ENCODE measurements at regions of chr1 and their contacts with region 1.

Region 1: GRCh38 chr1:53485478-53486394 is 26.5 kb downstream of the DMRTB1 start:
- ATAC-seq: peak; percentile 93 to 99 (median 96)
- H3K4me3 ChIP-seq: no peak overlapping the region
- H3K27ac ChIP-seq: no peak overlapping the region
- H3K4me1 ChIP-seq: peaks cover 10 to 11% of the 10 kb centered on the region in 2 donors

Region 2: GRCh38 chr1:53681977-53682685 is 196.4 kb after region 1 on chr1:
- in situ Hi-C with region 1: loop called in 2 of 9 experiments (anchors 10 to 25 kb)
- ATAC-seq: peak; percentile 43 to 77 (median 68)
- H3K4me3 ChIP-seq: no peak overlapping the region
- H3K27ac ChIP-seq: no peak overlapping the region
- H3K4me1 ChIP-seq: peaks cover 23 to 43% of the 10 kb centered on the region in 2 donors

Region 3: DNA sequence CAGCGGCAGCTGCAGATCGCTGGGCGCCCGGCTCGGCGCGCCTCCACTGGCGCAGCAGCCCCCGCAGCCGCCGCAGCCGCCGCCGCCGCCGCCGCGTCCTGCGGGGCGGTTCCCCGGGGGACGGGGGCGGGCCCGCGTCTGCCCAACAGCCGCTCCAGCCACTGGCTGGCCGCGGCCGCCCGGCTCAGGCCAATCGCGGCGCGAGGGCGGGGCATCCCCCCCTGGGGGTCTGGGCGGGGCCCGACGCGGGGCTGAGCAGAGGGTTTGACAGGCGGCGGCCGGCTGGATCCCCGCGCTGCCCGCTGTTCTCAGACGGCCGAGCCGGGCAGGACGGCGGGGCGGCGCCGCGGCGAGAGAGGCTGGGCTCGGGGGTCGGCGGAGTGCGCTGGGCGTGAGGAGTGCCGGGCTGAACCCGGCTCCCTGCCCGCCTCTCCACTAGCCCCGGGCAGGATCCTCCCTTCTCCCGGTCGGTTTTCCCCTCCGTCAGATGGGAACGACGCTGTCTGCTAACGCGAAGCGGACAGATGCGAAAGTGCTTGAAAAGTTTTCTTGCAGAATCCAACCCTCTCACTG is 253.5 kb after region 1 on chr1 and contains the start of gene GLIS1:
- in situ Hi-C with region 1: loop called in 3 of 9 experiments (anchors 25 kb)
- ATAC-seq: peak; percentile 86 to 98 (median 97)
- H3K4me3 ChIP-seq: peak within 1 kb of the TSS; percentile 40 to 55 (median 46)
- H3K27ac ChIP-seq: no peak within 1 kb of the TSS
- H3K4me1 ChIP-seq: peaks cover 0 to 5% of the 10 kb centered on the region in 2 donors
- total RNA-seq, gene GLIS1: 0.14 to 4.7 (median 0.33) TPM

Region 4: DNA sequence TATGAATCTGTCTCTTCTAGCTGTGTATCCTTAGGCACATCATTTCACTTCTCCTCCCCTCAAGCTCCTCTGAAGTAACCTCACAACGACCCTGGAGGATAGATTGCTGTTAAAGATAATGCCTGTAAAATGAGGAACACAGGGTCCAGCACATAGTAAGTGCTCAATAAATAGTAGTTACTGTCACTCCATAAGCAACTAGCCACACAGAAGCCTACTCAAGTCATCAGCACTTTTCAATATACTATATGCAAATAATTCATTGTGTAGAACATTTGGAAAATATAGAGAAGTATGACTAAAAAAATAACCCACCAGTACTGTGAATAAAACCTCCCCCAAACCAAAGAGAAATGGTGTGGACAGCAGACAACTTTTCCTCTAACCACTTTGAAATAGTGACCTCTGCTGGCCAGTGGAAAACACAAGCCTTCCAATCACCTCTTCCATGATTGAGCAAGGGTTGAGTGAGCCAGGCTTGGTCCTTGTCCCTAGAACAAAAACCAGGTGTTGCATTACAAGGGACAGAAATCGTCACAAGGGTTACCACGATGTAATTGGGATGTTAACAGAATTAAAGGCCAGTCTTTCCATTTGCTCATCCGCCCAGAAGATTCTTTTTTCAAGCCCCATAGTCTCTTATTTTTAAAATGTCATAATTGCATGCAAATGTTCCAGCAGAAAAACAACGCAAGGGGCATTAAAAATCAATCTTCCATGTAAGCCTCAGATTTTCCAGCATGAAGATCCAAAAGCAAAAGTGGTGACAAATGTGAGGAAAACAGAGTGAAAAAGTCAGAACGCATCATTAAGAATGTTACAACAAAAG is 269.0 kb after region 1 on chr1:
- in situ Hi-C with region 1: loop called in 4 of 9 experiments (anchors 25 kb)
- ATAC-seq: peak in 3 of 8 experiments; percentile 68 to 77 (median 77)
- H3K4me3 ChIP-seq: no peak overlapping the region
- H3K27ac ChIP-seq: no peak overlapping the region
- H3K4me1 ChIP-seq: no peaks in the 10 kb centered on the region

Region 5: DNA sequence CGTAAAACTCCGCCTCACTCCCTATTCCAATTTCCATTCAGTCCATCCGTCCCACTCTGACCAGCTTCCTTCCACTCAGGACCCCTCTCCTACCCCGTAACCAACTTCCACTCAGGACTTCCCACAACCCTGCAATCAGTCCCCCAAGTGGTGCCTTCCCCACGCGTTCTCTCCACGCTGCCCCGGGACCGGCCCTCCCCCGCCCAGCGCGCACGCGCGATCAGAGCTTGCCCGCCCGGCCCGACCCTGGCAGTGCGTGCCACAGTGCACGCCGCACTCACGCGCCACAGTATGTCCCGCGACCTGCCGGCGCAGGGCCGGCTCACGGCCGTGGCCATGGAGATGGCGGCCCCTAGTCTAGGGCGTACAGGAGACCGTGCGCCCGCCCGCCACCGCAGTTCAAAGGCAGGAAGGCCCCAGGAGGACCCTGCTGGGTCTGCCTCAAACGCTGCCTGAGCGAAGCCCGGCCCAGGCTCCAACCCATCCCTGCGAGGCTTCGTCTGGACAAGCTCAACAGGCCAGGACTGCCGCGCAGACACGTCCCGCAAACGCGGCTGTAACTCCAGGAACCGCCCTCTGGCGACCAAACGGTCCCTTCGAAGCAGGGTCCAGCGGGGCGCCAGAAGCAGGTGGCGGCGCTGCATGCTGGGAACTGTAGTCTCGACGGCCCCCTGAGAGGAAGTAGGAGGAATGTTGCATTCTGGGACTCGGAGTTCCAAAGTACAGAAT is 352.4 kb after region 1 on chr1 and contains the start of gene NDC1:
- in situ Hi-C with region 1: loop called in 1 of 9 experiments (anchors 25 kb)
- ATAC-seq: peak; percentile 92 to 95 (median 93)
- H3K4me3 ChIP-seq: peak within 1 kb of the TSS; percentile 49 to 64 (median 55)
- H3K27ac ChIP-seq: peak within 1 kb of the TSS; percentile 99
- H3K4me1 ChIP-seq: peaks cover 4 to 10% of the 10 kb centered on the region in 2 donors
- total RNA-seq, gene NDC1: 10.5 to 36.4 (median 16.6) TPM

Region 6: DNA sequence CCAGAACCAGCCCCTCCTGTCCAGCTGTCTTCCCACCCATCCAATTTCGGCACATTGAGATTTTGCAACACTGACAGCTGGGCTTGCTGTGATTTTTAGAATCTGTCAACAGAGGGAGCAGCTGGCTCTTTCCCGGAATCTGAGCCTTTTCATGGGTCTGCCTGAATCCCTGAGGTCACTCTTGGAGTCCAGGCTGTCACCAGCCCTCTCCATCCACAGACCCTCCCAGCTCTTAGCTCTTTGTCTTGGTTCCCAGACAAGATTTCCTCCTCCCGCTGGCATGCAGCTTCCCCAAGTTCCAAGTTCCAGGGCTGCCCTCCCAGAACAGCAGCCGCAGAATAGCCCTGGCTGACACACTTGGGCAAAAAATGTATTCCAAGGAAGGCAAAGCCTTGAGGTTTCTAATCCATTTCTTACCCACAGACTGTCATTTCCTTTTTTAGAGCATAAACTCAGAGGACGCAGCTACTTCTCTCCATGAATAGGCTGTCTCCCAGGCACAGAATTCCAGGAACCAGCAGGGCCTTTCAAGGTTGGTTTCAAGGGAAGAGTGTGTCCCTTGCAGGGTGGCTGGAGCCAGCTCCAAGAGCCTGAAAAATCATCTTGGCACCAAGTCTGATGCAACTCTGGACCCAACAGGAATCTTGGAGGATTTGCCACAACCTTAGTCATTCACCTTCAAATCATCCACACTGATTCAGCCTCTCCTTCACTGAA is 1487.6 kb after region 1 on chr1:
- in situ Hi-C with region 1: no loop called
- ATAC-seq: peak; percentile 84 to 97 (median 96)
- H3K4me3 ChIP-seq: no peak overlapping the region
- H3K27ac ChIP-seq: no peak overlapping the region
- H3K4me1 ChIP-seq: peaks cover 0 to 3% of the 10 kb centered on the region in 2 donors